ENCODE measurements at regions of chr10 and their contacts with region 1.

Region 1: DNA sequence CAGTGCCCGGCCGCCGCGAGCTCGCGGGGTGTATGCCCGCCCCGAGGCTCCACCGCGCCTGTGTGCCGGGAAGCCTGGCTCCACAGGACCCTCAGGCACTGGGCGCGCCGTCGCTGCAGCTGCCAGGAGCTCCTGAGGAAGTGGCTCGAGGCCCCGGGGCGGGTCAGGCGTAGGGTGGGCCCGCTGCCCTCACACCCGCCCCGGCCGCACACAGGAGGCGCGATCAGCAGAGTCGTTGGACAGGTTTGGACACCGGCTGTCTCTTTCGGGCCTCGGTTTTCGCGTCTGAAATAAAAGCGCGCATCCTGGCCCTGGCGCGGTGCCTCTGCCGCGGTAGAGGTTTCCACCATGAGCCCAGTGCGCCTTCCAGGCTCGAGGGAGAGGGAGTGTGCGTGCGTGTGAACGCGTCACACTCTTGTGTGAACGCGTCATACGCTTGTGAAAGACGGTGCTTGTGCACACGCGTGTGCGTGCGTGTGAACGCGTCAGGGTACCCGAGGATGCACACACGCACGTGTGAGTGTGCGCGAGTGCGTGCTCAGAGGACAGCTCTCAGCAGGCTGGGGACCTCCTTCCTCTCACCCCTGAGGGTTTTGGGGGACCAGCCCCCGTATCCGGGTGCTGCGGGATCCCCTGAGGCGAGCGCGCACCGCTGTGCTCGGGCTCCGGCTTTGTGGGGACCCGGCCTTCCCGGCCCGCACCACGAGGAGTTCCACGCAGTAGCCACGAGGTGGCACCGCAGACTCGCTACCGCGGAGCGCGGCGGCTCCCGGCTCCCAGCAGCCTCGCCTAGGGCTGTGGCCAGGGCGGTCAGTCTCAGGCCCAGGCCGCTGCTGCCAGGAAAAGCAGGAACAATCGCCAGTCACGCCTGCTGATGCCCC is 83.8 kb downstream of the BMS1 start:
- DNase-seq: peak; percentile 81

Region 2: GRCh38 chr10:42877496-42878030 is 11.2 kb after region 1 on chr10:
- CTCF ChIA-PET with region 1: no interaction called
- POLR2A ChIA-PET with region 1: no interaction called
- DNase-seq: no peak

Region 3: GRCh38 chr10:43078987-43079275 is 212.6 kb after region 1 on chr10:
- CTCF ChIA-PET with region 1: interaction called, 10 read pairs
- POLR2A ChIA-PET with region 1: no interaction called
- DNase-seq: peak; percentile 60

Measured in HEK293T (cell line).